PC-3 (cell line): ENCODE measurements at regions of chr5 and their contacts with region 1.

Region 1: GRCh38 chr5:157697453-157697852 is 26.1 kb downstream of the C5orf52 start:
- DNase-seq: no peak
- ATAC-seq: no peak
- H3K4me3 ChIP-seq: no peak overlapping the region
- H3K27ac ChIP-seq: no peak overlapping the region
- H3K4me1 ChIP-seq: no peaks in the 10 kb centered on the region
- H3K27me3 ChIP-seq: no peaks in the 10 kb centered on the region
- CTCF ChIP-seq: no peak

Region 2: DNA sequence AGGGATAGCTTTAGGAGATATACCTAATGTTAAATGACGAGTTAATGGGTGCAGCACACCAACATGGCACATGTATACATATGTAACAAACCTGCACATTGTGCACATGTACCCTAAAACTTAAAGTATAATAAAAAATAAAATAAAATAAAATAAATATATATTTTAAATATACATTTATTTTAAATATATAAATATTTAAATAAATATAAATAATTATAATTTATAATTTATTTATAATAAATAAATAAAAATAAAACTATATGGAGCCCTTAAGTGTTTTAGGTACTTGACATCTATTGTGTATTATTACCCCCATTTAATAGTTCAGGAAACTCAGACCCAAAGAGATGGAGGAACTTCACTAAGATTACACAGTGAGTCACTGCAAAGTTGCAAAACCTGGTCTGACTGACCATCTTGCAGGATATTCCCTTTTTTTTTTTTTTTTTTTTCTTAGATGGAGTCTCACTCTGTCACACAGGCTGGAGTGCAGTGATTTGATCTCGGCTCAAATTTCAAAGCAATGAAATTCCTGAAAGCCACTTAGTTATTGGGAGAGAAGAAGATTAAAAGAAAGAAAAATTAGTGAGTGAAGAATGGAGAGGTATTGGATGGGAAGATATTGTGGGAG is 31.9 kb before region 1 on chr5:
- CTCF ChIA-PET with region 1: no interaction called
- POLR2A ChIA-PET with region 1: no interaction called
- intact Hi-C with region 1: no loop called
- DNase-seq: peak; percentile 98
- ATAC-seq: peak; percentile 64
- H3K4me3 ChIP-seq: no peak overlapping the region
- H3K27ac ChIP-seq: peak overlapping the region; percentile 70
- H3K4me1 ChIP-seq: peaks cover 20% of the 10 kb centered on the region
- H3K27me3 ChIP-seq: no peaks in the 10 kb centered on the region
- CTCF ChIP-seq: no peak

Region 3: GRCh38 chr5:157677931-157678330 is 19.5 kb before region 1 on chr5:
- CTCF ChIA-PET with region 1: no interaction called
- POLR2A ChIA-PET with region 1: no interaction called
- intact Hi-C with region 1: loop called (anchors 2 kb)
- DNase-seq: no peak
- ATAC-seq: no peak
- H3K4me3 ChIP-seq: no peak overlapping the region
- H3K27ac ChIP-seq: no peak overlapping the region
- H3K4me1 ChIP-seq: no peaks in the 10 kb centered on the region
- H3K27me3 ChIP-seq: no peaks in the 10 kb centered on the region
- CTCF ChIP-seq: no peak